ENCODE measurements at regions of chr12 and their contacts with region 1.

Region 1: DNA sequence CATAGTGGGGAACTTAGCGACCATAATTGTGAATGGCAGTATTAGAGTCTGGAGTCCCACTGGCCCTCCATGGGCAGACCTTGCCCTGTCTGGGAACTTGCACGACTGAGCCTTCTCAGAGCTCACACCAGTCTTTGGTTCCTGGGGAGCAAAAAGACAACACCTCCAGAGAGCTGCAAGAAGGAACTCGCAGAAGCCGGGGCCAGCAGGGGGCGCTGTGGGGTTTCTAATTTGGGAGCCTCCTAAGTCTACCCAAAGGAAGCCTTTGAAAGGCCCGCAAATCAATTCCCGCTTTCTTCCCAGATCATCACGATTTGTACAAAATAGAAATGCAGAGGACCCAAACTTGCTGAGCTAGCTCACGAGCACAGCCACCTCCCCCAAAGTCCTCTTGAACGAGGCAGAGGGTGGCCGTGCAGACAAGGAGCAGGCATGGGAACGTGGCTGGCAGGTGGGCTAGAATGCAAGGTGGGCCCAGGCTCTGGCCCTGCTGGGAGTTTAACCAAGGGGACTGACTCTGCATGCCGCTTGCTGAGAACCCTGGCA is 46.3 kb upstream of the FBXO21 start:
- DNase-seq: peak; percentile 99
- ATAC-seq: peak; percentile 80
- H3K4me3 Mint-ChIP-seq: no peak overlapping the region
- H3K27ac Mint-ChIP-seq: 0 out of 2 replicates have a peak overlapping the region, but pooled peaks have one; percentile 19
- H3K4me1 Mint-ChIP-seq: peaks cover 24% of the 10 kb centered on the region
- H3K27me3 Mint-ChIP-seq: no peaks in the 10 kb centered on the region
- CTCF ChIP-seq: peak; percentile 88

Region 2: GRCh38 chr12:117212563-117213190 is 23.9 kb before region 1 on chr12:
- CTCF ChIA-PET with region 1: interaction called, 16 read pairs
- POLR2A ChIA-PET with region 1: no interaction called
- DNase-seq: peak; percentile 80
- ATAC-seq: peak; percentile 84
- H3K4me3 Mint-ChIP-seq: no peak overlapping the region
- H3K27ac Mint-ChIP-seq: 0 out of 2 replicates have a peak overlapping the region, but pooled peaks have one; percentile 11
- H3K4me1 Mint-ChIP-seq: peaks cover 13% of the 10 kb centered on the region
- H3K27me3 Mint-ChIP-seq: no peaks in the 10 kb centered on the region; the same call in 1 of the 2 replicates
- CTCF ChIP-seq: peak; percentile 70

Region 3: GRCh38 chr12:117331703-117332102 is 95.2 kb after region 1 on chr12:
- CTCF ChIA-PET with region 1: interaction called, 11 read pairs
- POLR2A ChIA-PET with region 1: no interaction called
- DNase-seq: no peak
- ATAC-seq: no peak
- H3K4me3 Mint-ChIP-seq: no peak overlapping the region
- H3K27ac Mint-ChIP-seq: no peak overlapping the region
- H3K4me1 Mint-ChIP-seq: peaks cover 16% of the 10 kb centered on the region
- H3K27me3 Mint-ChIP-seq: no peaks in the 10 kb centered on the region
- CTCF ChIP-seq: no peak

Region 4: GRCh38 chr12:117587631-117588287 is 351.2 kb after region 1 on chr12:
- CTCF ChIA-PET with region 1: interaction called, 10 read pairs
- POLR2A ChIA-PET with region 1: no interaction called
- DNase-seq: peak; percentile 81
- ATAC-seq: peak; percentile 86
- H3K4me3 Mint-ChIP-seq: no peak overlapping the region
- H3K27ac Mint-ChIP-seq: no peak overlapping the region
- H3K4me1 Mint-ChIP-seq: peaks cover 39% of the 10 kb centered on the region
- H3K27me3 Mint-ChIP-seq: no peaks in the 10 kb centered on the region
- CTCF ChIP-seq: peak; percentile 91

Region 5: GRCh38 chr12:117850048-117850447 is 613.5 kb after region 1 on chr12:
- CTCF ChIA-PET with region 1: interaction called, 19 read pairs
- POLR2A ChIA-PET with region 1: no interaction called
- DNase-seq: peak; percentile 45
- ATAC-seq: peak; percentile 88
- H3K4me3 Mint-ChIP-seq: no peak overlapping the region
- H3K27ac Mint-ChIP-seq: no peak overlapping the region
- H3K4me1 Mint-ChIP-seq: peaks cover 28% of the 10 kb centered on the region
- H3K27me3 Mint-ChIP-seq: no peaks in the 10 kb centered on the region
- CTCF ChIP-seq: peak; percentile 92